Calu3 (cell line): ENCODE measurements at regions of chr17 and their contacts with region 1.

Region 1: DNA sequence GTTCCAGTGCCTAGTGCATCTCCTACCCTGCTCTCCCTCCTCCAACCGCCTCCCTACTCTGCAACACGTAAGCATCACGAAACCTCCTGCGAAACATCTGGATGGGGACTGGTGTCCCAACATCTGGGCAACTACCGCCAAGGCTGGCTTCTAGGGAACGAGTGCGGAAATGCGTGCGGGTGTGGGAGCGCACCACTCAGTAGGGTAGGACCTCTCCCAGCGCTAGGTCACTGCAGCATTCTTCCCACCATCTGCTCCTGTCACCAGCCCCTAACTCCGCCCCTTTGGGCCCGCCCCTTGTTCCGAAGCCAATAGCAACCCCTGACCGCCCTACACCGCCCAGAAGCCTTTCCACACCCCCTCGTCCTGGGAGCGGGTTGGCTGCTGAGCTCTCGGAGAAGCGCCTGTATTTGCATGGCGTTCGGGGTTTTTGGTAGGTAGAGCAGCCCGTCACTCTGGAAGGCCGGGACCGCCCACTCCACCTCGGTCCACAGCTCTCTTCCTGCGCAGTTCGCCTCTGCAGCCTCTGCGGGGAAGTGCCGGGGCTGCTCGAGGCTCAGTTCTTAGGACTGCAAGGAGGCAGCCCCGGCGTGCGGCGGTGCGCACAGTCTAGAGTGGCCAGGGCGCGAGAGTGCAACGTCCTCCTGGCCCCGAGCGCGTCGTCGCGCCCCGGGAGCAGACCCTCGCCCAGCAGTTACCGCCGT is at the start of gene HS3ST3B1:
- DNase-seq: peak; percentile 97
- H3K4me3 Mint-ChIP-seq: peak within 1 kb of the TSS; percentile 66
- H3K27ac Mint-ChIP-seq: no peak within 1 kb of the TSS
- H3K4me1 Mint-ChIP-seq: peaks cover 12% of the 10 kb centered on the region
- H3K27me3 Mint-ChIP-seq: peaks cover 66% of the 10 kb centered on the region
- CTCF ChIP-seq: no peak
- total RNA-seq, gene HS3ST3B1: 0.78 and 0.80 TPM in 2 replicates

Region 2: DNA sequence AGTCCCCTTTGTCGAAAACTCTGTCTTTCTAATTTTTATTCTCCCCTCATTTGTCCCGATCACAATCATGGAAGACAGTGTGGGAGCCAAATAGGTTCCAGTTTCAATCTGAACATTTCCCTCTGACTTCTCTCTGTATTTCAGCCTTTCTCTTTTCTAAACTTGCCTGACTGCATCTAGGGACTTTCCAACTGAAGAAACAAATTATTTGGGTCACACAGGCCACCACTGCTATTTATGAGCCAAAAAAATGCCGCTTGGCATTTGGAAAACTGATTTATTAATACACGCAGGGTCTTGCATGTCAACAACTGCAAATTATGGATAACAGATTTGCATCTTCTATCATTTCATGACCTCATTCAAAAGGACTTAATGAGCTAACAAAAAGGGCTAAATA is 1227.7 kb before region 1 on chr17:
- CTCF ChIA-PET with region 1: no interaction called
- intact Hi-C with region 1: no loop called
- DNase-seq: no peak
- H3K4me3 Mint-ChIP-seq: no peak overlapping the region
- H3K27ac Mint-ChIP-seq: no peak overlapping the region
- H3K4me1 Mint-ChIP-seq: no peaks in the 10 kb centered on the region
- H3K27me3 Mint-ChIP-seq: no peaks in the 10 kb centered on the region
- CTCF ChIP-seq: no peak

Region 3: DNA sequence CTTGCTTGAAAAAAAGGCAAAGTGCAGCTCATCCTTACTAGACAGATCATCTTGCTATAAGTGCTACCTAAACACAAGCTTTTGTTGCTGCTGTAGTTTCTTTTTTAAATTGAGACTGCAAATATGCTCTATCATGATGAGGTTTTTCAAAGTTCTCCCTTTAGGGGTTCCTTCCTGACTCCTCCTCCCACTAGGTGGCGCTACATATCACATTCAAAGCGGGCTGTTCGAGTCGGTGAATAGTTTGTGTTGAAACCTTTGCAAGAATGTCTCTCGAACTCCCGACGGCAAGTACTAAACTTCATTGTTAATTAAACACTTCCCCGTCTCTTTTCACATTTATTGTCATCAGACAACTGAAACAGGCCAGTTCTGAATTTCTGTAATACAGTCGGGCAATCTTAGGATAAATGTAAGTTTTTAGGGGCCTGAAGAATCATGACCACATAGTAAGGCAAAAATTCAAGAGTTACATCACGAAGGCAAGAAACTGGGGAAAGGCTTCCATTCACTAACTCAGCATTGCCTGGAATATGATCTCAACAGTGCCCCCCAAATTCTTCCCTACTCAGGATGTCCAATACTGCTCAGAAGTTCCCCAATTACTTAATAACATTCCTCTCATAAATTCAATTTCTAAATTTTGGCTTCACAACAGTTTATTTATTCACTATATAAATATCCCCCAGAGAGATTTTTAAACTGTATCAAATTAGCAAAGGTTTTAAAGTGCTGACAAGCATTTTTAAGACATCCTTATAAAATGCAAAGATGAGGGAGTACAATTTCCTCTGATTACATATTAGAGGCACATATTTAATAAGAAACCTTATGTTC is 705.7 kb before region 1 on chr17:
- CTCF ChIA-PET with region 1: interaction called, 7 read pairs
- intact Hi-C with region 1: loop called (anchors 1 kb)
- DNase-seq: peak; percentile 77
- H3K4me3 Mint-ChIP-seq: no peak overlapping the region
- H3K27ac Mint-ChIP-seq: no peak overlapping the region
- H3K4me1 Mint-ChIP-seq: no peaks in the 10 kb centered on the region
- H3K27me3 Mint-ChIP-seq: no peaks in the 10 kb centered on the region
- CTCF ChIP-seq: peak; percentile 45

Region 4: DNA sequence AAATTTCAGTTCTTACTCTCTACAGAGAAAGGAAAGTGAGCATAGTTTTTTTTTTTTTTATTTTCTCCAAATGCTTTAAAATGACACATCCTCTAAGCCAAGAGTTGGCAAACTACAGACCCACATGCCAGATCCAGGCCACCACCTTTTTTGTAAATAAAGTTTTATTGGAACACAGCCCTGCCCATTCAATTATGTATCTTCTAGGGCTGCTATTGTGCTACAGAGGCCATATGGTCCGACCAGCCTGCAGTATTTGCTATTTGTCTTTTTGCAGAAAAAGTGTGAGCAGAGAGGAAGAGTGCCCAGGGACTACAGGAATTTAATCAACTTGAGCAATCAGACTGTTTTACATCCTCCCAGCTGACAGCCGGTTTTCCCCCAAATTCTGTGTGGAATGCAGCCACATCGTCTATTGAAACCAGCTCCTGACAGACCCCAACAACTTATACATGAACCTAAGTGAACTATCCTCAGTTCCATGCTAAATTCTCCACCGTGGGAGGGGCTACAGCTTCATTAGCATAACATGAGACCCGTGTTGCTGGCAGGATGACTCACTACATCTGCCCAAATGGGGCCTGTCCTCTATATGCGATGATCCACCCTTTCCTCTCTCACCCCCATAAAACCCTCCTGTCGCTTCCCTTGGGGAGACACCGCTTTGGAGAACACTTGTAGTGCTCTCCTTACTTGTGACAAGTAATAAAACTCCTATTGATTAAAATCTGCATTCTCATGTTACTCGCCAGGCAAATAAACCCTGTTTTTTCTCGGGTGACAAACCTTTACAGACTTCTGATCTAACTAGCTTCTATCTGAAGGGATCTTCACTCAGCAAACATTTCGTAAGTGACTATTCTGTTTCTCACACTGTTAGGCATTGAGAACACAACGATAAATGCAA is 549.7 kb before region 1 on chr17:
- CTCF ChIA-PET with region 1: no interaction called
- intact Hi-C with region 1: loop called (anchors 10 kb)
- DNase-seq: no peak
- H3K4me3 Mint-ChIP-seq: no peak overlapping the region
- H3K27ac Mint-ChIP-seq: no peak overlapping the region
- H3K4me1 Mint-ChIP-seq: no peaks in the 10 kb centered on the region
- H3K27me3 Mint-ChIP-seq: no peaks in the 10 kb centered on the region
- CTCF ChIP-seq: no peak

Region 5: DNA sequence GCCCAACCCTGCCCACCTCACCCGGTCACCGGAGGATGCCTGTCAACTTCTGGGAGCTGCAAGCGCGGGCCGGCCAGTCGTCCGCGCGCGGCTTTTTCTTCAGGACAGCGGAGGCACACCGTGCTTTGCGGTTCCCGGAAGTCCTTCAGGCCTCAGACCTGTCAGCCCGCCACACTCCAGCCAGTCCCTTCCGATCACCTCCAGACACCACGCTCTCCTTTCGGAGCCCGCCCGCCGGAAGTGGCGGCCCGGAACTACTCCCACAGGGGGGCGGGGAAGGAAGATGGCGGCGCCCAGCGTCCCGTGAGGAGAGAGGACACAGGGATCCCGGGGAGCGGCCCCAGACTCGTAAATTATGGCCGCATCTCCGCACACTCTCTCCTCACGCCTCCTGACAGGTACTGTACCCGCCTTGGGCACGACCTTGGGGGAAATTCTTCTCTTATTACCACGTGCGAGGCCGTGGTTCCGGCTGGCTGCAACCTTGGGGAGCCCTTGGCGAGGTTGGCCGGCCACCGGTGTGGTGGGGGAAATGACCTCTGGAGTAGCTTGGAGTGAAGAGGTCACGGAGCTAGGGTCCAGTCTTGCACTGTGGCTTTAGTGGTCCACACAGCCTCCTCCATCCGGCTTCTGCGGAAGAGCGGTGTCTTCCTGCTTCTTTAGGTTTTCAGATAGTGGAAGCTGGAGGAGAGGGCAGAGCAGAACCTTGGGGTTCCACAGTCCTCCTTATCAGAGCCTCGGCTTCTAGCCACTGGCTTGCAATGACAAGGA is 231.3 kb before region 1 on chr17 and contains the start of gene COX10:
- CTCF ChIA-PET with region 1: interaction called, 4 read pairs
- intact Hi-C with region 1: loop called (anchors 5 kb)
- DNase-seq: peak; percentile 93
- H3K4me3 Mint-ChIP-seq: peak within 1 kb of the TSS; percentile 95
- H3K27ac Mint-ChIP-seq: peak within 1 kb of the TSS; percentile 94
- H3K4me1 Mint-ChIP-seq: peaks cover 27% of the 10 kb centered on the region
- H3K27me3 Mint-ChIP-seq: no peaks in the 10 kb centered on the region
- CTCF ChIP-seq: no peak
- total RNA-seq, gene COX10: 17.2 and 18.8 TPM in 2 replicates

Region 6: GRCh38 chr17:14205989-14206461 is 94.7 kb before region 1 on chr17:
- CTCF ChIA-PET with region 1: interaction called, 5 read pairs
- intact Hi-C with region 1: loop called (anchors 1 kb)
- DNase-seq: peak; percentile 92
- H3K4me3 Mint-ChIP-seq: peak overlapping the region; percentile 34
- H3K27ac Mint-ChIP-seq: peak overlapping the region; percentile 73
- H3K4me1 Mint-ChIP-seq: peaks cover 77% of the 10 kb centered on the region
- H3K27me3 Mint-ChIP-seq: no peaks in the 10 kb centered on the region
- CTCF ChIP-seq: no peak

Region 7: DNA sequence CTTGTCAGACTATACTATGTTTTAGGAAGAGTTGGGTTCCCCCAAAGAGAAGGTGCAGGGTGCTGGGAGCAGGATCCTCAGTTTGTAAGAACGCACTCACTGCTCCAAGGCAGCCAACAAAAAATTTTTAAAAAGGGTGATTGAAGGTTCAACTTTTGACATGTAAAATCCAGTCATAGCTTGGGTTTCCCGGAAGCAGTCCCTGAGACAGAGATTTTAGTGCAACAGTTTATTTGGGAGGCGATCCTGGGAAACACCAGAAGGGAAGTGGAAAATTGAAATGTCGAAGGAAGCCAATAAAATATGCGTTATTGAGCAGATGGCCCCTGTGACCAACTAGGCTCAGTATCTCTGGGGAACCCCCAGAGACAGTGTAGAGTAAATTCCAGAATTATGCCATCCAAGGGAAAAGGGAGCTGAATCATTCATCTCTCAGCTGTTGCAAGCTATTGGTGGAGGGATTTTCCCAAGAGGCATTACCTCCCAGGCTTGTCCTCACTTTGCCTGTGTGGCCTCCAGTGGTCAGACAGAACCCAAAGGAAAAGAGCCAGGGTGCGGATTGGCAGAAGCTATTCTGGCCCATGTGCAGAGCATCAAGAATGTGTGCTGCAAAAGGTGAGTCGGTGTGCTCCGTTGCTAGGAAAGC is 73.0 kb after region 1 on chr17:
- CTCF ChIA-PET with region 1: no interaction called
- intact Hi-C with region 1: no loop called
- DNase-seq: no peak
- H3K4me3 Mint-ChIP-seq: no peak overlapping the region
- H3K27ac Mint-ChIP-seq: no peak overlapping the region
- H3K4me1 Mint-ChIP-seq: no peaks in the 10 kb centered on the region
- H3K27me3 Mint-ChIP-seq: no peaks in the 10 kb centered on the region
- CTCF ChIP-seq: no peak

Region 8: GRCh38 chr17:14672830-14673229 is 372.1 kb after region 1 on chr17:
- CTCF ChIA-PET with region 1: no interaction called
- intact Hi-C with region 1: loop called (anchors 10 kb)
- DNase-seq: peak; percentile 45
- H3K4me3 Mint-ChIP-seq: no peak overlapping the region
- H3K27ac Mint-ChIP-seq: no peak overlapping the region
- H3K4me1 Mint-ChIP-seq: peaks cover 17% of the 10 kb centered on the region
- H3K27me3 Mint-ChIP-seq: no peaks in the 10 kb centered on the region
- CTCF ChIP-seq: no peak

Region 9: DNA sequence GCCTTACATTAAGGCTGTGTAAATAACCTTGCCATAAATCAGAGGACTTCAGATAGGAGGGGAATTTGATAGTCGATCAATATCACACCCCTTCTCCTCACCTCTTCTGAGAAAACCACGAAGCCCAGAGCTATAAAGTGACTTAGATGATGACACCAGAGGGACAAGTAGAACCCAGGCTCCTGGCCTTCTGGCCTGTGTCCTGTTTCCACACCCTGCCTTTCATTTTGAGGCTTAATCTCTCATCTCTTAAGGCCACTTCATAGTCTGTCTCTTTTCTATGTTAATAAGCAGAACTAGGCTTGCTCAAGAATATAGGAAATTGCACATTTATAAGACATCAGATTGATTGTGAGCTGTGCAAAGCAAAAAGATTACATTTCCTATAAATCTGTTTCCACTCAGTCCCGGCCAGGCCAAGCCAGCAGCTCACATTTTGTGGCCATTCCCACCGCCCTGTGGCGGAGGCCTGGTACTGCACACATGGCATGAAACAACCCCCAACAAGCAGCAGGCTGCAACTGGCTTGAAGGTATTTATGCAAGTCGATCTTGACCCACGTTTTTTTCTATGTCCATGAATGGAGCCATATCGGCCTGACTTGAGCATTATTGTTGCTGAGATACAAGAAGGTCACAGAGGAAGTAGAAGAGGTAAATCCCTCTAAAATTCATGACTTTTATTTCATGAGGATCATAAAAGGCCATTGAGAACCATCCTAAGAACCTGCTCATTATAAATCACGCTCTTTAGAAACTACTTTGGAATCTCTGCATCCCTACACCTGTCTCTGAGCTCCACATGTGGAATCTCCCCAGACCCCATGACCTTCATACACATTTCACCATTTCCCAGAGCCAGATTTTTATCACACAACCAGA is 870.7 kb after region 1 on chr17:
- CTCF ChIA-PET with region 1: no interaction called
- intact Hi-C with region 1: loop called (anchors 10 kb)
- DNase-seq: peak; percentile 62
- H3K4me3 Mint-ChIP-seq: no peak overlapping the region
- H3K27ac Mint-ChIP-seq: no peak overlapping the region
- H3K4me1 Mint-ChIP-seq: no peaks in the 10 kb centered on the region
- H3K27me3 Mint-ChIP-seq: no peaks in the 10 kb centered on the region
- CTCF ChIP-seq: no peak